CD4-positive, alpha-beta T cell (primary cell): ENCODE measurements at regions of chr7 and their contacts with region 1.

Region 1: DNA sequence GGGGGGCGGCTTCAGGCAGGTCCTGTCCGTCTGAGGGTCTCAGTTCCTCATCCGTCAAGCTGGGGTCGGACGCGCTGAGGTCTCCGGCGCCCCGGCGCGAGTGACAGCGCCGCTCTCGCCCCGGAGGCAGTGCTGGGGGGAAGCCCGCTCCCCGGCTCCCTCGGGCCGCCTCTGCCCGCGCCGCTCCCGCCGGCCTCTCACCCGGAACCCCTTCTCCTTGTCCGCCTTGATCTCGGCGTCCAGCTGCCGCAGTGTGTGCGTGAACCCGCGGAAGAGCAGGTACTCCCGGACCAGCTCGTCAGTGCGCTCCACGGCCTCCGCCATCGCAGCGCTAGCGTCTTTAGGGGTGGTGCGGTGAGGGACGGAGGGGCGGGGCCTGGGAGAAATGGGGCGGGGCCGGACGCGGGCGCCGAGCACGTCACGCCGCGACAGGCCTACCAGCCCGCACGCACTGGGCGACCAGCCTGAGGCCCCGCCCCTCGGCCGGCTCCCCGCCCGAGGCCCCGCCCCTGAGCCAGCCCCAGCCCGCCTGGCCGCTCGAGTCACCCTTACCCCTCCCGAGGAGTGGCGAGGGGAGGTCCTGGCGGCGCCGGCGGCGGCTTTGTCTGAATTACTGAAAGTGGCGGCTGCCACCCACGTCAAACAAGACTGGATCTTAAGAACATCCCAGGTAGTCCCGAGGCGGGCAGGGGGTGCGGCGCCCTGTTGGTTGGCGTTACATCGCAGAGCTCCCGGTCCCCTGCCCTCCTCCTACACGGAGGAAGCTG is at the start of gene WDR91:
- DNase-seq: peak; percentile 92 to 98 (median 97)
- ATAC-seq: peak; percentile 91
- H3K4me3 ChIP-seq: peak within 1 kb of the TSS; percentile 95
- H3K4me3 Mint-ChIP-seq: peak within 1 kb of the TSS; percentile 95
- H3K27ac ChIP-seq: peak within 1 kb of the TSS; percentile 77
- H3K27ac Mint-ChIP-seq: peak within 1 kb of the TSS; percentile 92
- H3K4me1 ChIP-seq: peaks cover 37% of the 10 kb centered on the region
- H3K4me1 Mint-ChIP-seq: peaks cover 42% of the 10 kb centered on the region
- H3K27me3 ChIP-seq: no peaks in the 10 kb centered on the region
- H3K27me3 Mint-ChIP-seq: no peaks in the 10 kb centered on the region
- CTCF ChIP-seq: no peak
- total RNA-seq, gene WDR91: 39.9 to 41.7 TPM

Region 2: GRCh38 chr7:134458806-134459698 is 752.3 kb before region 1 on chr7 and contains the start of gene AKR1B1:
- CTCF ChIA-PET with region 1: no interaction called
- POLR2A ChIA-PET with region 1: no interaction called
- intact Hi-C with region 1: loop called in 1 of 2 experiments (anchors 5 kb)
- DNase-seq: peak; percentile 77 to 93 (median 83)
- ATAC-seq: peak; percentile 88
- H3K4me3 ChIP-seq: peak within 1 kb of the TSS; percentile 77
- H3K4me3 Mint-ChIP-seq: peak within 1 kb of the TSS; percentile 90
- H3K27ac ChIP-seq: peak within 1 kb of the TSS; percentile 18 to 51
- H3K27ac Mint-ChIP-seq: peak within 1 kb of the TSS; percentile 70
- H3K4me1 ChIP-seq: peaks cover 28% of the 10 kb centered on the region
- H3K4me1 Mint-ChIP-seq: peaks cover 53% of the 10 kb centered on the region
- H3K27me3 ChIP-seq: no peaks in the 10 kb centered on the region
- H3K27me3 Mint-ChIP-seq: no peaks in the 10 kb centered on the region
- CTCF ChIP-seq: peak; percentile 63
- total RNA-seq, gene AKR1B1: 60.6 to 65.5 TPM

Region 3: DNA sequence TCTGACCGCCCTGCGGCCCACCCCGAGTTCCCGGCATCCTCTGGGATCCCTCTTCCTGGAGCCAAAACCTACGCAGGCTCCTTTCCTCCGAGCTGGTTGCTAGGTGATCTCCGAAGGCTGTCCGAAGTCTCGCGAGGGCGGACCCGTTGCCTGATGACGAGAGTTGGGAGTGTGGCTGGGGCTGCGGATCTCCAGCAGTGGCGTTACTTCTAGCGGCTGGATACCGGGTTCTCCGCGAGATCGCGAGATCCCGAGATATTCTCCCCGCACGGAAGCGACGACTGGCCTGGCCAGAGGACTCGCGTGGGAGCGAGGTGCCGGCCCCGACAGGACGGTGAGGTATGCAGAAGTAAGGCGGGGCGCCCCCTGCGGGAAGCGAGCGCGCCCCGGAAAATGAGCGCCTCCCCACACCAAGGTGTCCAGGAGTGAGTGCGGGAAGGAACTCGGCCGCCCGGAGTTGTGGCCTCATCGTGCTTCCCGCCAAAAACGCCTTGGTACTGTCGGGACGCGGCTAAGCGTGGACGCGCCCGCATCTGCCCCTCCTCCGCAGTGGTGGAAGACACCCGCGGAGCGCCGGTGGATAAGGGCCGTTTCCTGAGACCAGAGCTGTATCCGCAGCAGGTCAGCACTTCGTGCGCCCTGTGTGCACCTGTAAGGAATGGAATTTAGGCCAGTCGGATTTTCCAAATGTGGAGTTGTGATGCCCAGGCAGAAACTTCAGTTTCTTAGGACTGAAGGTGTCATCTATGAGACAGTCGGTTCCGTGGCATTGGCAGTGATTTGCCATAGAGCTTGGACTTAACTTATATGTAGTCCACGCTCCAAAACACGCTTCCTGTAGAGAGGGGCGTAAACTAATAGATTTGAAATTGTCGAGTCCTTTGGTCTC is 224.8 kb before region 1 on chr7 and contains the start of gene AGBL3:
- CTCF ChIA-PET with region 1: interaction called, 6 read pairs
- POLR2A ChIA-PET with region 1: interaction called, 27 read pairs
- intact Hi-C with region 1: loop called (anchors 2 to 5 kb)
- DNase-seq: peak; percentile 79 to 93 (median 85)
- ATAC-seq: peak; percentile 91
- H3K4me3 ChIP-seq: peak within 1 kb of the TSS; percentile 90
- H3K4me3 Mint-ChIP-seq: peak within 1 kb of the TSS; percentile 97
- H3K27ac ChIP-seq: peak within 1 kb of the TSS; percentile 89 to 92
- H3K27ac Mint-ChIP-seq: peak within 1 kb of the TSS; percentile 94
- H3K4me1 ChIP-seq: no peaks in the 10 kb centered on the region
- H3K4me1 Mint-ChIP-seq: peaks cover 46% of the 10 kb centered on the region
- H3K27me3 ChIP-seq: no peaks in the 10 kb centered on the region
- H3K27me3 Mint-ChIP-seq: no peaks in the 10 kb centered on the region
- CTCF ChIP-seq: peak; percentile 85
- total RNA-seq, gene AGBL3: 2.2 to 2.5 TPM

Region 4: GRCh38 chr7:135170274-135170997 is 40.9 kb before region 1 on chr7 and contains the start of gene CYREN:
- CTCF ChIA-PET with region 1: interaction called, 9 read pairs
- POLR2A ChIA-PET with region 1: interaction called, 32 read pairs
- intact Hi-C with region 1: loop called (anchors 5 kb)
- DNase-seq: peak; percentile 75 to 95 (median 87)
- ATAC-seq: peak; percentile 77
- H3K4me3 ChIP-seq: peak within 1 kb of the TSS; percentile 82
- H3K4me3 Mint-ChIP-seq: peak within 1 kb of the TSS; percentile 91
- H3K27ac ChIP-seq: peak within 1 kb of the TSS; percentile 94
- H3K27ac Mint-ChIP-seq: peak within 1 kb of the TSS; percentile 94
- H3K4me1 ChIP-seq: peaks cover 47% of the 10 kb centered on the region
- H3K4me1 Mint-ChIP-seq: peaks cover 48% of the 10 kb centered on the region
- H3K27me3 ChIP-seq: no peaks in the 10 kb centered on the region
- H3K27me3 Mint-ChIP-seq: no peaks in the 10 kb centered on the region
- CTCF ChIP-seq: peak; percentile 76
- total RNA-seq, gene CYREN: 14.0 to 15.8 TPM

Region 5: GRCh38 chr7:135368416-135369186 is 157.2 kb after region 1 on chr7:
- CTCF ChIA-PET with region 1: no interaction called
- POLR2A ChIA-PET with region 1: no interaction called
- intact Hi-C with region 1: no loop called
- DNase-seq: no peak
- ATAC-seq: no peak
- H3K4me3 ChIP-seq: no peak overlapping the region
- H3K4me3 Mint-ChIP-seq: no peak overlapping the region
- H3K27ac ChIP-seq: no peak overlapping the region
- H3K27ac Mint-ChIP-seq: no peak overlapping the region
- H3K4me1 ChIP-seq: no peaks in the 10 kb centered on the region
- H3K4me1 Mint-ChIP-seq: peaks cover 6% of the 10 kb centered on the region
- H3K27me3 ChIP-seq: no peaks in the 10 kb centered on the region
- H3K27me3 Mint-ChIP-seq: no peaks in the 10 kb centered on the region
- CTCF ChIP-seq: no peak

Region 6: GRCh38 chr7:135525426-135525825 is 314.1 kb after region 1 on chr7:
- CTCF ChIA-PET with region 1: no interaction called
- POLR2A ChIA-PET with region 1: no interaction called
- intact Hi-C with region 1: no loop called
- DNase-seq: no peak
- ATAC-seq: no peak
- H3K4me3 ChIP-seq: no peak overlapping the region
- H3K4me3 Mint-ChIP-seq: no peak overlapping the region
- H3K27ac ChIP-seq: no peak overlapping the region
- H3K27ac Mint-ChIP-seq: no peak overlapping the region
- H3K4me1 ChIP-seq: no peaks in the 10 kb centered on the region
- H3K4me1 Mint-ChIP-seq: no peaks in the 10 kb centered on the region
- H3K27me3 ChIP-seq: no peaks in the 10 kb centered on the region
- H3K27me3 Mint-ChIP-seq: no peaks in the 10 kb centered on the region
- CTCF ChIP-seq: no peak

Region 7: DNA sequence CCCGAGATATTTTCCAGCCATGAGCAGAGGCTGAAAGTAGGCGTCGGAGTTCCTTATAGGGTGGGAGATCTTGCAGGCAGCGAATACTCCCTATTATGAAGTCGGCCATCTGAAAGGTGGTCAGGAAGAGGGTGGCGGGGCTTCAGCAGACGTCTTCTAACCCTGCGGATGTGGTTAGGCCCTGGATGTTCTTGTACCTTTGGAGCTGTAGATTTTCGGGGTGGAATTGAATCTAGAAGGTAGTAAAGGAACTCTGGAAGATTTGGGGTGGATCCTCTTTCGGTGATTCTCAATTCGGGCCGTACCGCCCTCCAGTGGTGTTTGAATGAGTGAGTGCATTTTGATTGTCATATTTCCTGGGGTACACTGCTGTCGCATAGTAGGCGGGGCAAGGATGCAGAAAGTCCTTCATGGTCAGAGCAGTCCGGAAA is 347.0 kb after region 1 on chr7:
- CTCF ChIA-PET with region 1: no interaction called
- POLR2A ChIA-PET with region 1: interaction called, 8 read pairs
- intact Hi-C with region 1: loop called in 1 of 2 experiments (anchors 5 kb)
- DNase-seq: peak; percentile 29 to 85 (median 52)
- ATAC-seq: peak; percentile 57
- H3K4me3 ChIP-seq: peak overlapping the region; percentile 99
- H3K4me3 Mint-ChIP-seq: no peak overlapping the region
- H3K27ac ChIP-seq: peak overlapping the region; percentile 93 to 99
- H3K27ac Mint-ChIP-seq: no peak overlapping the region
- H3K4me1 ChIP-seq: peaks cover 13% of the 10 kb centered on the region
- H3K4me1 Mint-ChIP-seq: peaks cover 20% of the 10 kb centered on the region
- H3K27me3 ChIP-seq: no peaks in the 10 kb centered on the region
- H3K27me3 Mint-ChIP-seq: no peaks in the 10 kb centered on the region
- CTCF ChIP-seq: peak; percentile 57

Region 8: DNA sequence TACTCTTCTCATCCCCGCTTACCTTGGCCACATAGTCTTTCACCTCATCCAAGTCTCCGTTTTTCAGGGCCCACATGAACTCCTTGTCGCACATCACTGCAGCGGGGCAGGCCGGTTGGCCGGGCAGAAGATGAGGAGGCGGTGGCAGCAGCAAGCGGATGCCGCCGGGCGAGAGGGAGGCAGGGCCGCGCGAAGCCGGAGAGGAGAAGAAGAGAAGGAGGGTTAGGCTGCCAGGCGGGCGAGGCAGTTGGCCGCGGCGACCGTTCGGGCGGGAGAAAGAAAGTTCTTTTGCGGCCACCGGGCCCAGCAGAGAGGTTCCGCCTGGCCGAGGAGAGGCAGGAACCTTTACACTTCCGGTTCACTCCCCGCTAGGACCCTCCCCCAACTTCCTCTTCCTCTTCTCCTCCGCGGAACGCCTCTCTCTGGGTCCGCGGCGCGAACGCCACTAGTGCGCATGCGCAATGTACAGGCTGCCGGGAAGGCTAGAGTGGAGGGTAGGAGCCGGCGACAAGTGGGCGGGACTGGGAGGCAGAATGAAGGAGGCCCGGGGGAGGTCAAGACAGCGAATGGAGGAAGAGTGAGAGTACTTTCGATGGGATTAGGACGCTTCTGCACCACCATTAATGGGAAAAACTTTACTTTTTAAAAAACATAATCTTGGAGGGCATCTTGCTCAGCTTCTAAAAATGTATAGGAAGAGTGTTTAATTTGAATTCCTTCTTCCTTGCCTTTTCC is 765.8 kb after region 1 on chr7 and contains the start of gene MTPN:
- CTCF ChIA-PET with region 1: no interaction called
- POLR2A ChIA-PET with region 1: no interaction called
- intact Hi-C with region 1: loop called in 1 of 2 experiments (anchors 5 kb)
- DNase-seq: peak; percentile 93 to 98 (median 97)
- ATAC-seq: peak; percentile 81
- H3K4me3 ChIP-seq: peak within 1 kb of the TSS; percentile 90
- H3K4me3 Mint-ChIP-seq: peak within 1 kb of the TSS; percentile 92
- H3K27ac ChIP-seq: peak within 1 kb of the TSS; percentile 90 to 91
- H3K27ac Mint-ChIP-seq: peak within 1 kb of the TSS; percentile 92
- H3K4me1 ChIP-seq: peaks cover 59% of the 10 kb centered on the region
- H3K4me1 Mint-ChIP-seq: peaks cover 86% of the 10 kb centered on the region
- H3K27me3 ChIP-seq: no peaks in the 10 kb centered on the region
- H3K27me3 Mint-ChIP-seq: no peaks in the 10 kb centered on the region
- CTCF ChIP-seq: no peak
- total RNA-seq, gene MTPN: 88.4 to 94.0 TPM